Activated CD4-positive, alpha-beta T cell treated with anti-CD3 and anti-CD28 coated beads for 36 hours (primary cell): ENCODE measurements at regions of chr4 and their contacts with region 1.

Region 1: GRCh38 chr4:102430461-102430910 is 70.7 kb upstream of the NFKB1 start:
- DNase-seq: no peak
- ATAC-seq: no peak
- H3K4me3 Mint-ChIP-seq: peak overlapping the region; percentile 81
- H3K27ac Mint-ChIP-seq: peak overlapping the region; percentile 87
- H3K4me1 Mint-ChIP-seq: peaks cover 12% of the 10 kb centered on the region
- H3K27me3 Mint-ChIP-seq: peaks cover 5% of the 10 kb centered on the region

Region 2: GRCh38 chr4:102055805-102056204 is 374.7 kb before region 1 on chr4:
- CTCF ChIA-PET with region 1: no interaction called
- POLR2A ChIA-PET with region 1: no interaction called
- intact Hi-C with region 1: no loop called
- DNase-seq: no peak
- ATAC-seq: no peak
- H3K4me3 Mint-ChIP-seq: no peak overlapping the region
- H3K27ac Mint-ChIP-seq: no peak overlapping the region
- H3K4me1 Mint-ChIP-seq: peaks cover 6% of the 10 kb centered on the region
- H3K27me3 Mint-ChIP-seq: peaks cover 2% of the 10 kb centered on the region

Region 3: DNA sequence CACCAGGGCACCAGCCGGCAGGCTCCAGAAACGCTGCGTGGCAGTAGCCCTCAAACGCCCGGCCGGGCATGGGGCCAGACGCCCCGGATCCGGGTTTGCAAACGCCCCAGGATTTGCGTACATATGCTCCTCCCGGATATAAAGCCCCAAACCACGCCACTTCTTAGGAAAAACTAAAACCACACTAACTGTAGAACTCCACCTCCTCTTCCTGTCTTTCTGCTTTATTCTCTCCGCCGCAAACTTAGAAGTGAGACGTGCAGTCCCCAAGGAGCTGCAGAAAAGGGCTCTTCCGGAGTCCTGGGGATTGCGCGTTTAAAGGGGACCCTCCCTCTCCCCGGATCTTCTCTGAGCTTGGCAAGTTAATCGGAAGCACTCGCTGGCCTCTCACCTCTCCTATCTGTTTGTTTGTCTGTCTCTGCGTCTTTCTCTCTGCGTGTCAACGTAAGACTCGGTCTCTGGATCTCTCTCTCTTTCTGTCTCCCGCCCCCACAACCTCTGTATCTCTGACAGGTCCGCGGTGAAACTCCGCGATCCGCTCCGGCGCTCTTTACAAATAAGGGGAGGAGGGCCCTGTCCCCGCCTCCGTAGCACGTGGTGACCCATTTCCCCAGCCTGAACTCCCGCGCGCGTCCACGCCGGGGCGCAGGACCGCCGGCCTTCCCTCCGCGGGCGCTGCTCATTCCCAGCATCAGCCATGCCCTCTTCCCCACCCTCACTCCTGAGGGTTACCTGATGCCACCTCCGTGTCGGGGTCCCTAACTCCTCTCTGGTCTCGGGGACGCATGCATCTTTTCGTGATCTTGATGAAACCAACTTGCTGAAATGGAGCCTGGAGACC is 85.3 kb before region 1 on chr4 and contains the start of gene SLC39A8:
- CTCF ChIA-PET with region 1: interaction called, 20 read pairs
- POLR2A ChIA-PET with region 1: no interaction called
- intact Hi-C with region 1: loop called (anchors 1 kb)
- DNase-seq: peak; percentile 95
- ATAC-seq: peak; percentile 83
- H3K4me3 Mint-ChIP-seq: peak within 1 kb of the TSS; percentile 86
- H3K27ac Mint-ChIP-seq: peak within 1 kb of the TSS; percentile 99
- H3K4me1 Mint-ChIP-seq: peaks cover 42% of the 10 kb centered on the region
- H3K27me3 Mint-ChIP-seq: no peaks in the 10 kb centered on the region
- total RNA-seq, gene SLC39A8: 46.9 to 53.5 TPM

Region 4: DNA sequence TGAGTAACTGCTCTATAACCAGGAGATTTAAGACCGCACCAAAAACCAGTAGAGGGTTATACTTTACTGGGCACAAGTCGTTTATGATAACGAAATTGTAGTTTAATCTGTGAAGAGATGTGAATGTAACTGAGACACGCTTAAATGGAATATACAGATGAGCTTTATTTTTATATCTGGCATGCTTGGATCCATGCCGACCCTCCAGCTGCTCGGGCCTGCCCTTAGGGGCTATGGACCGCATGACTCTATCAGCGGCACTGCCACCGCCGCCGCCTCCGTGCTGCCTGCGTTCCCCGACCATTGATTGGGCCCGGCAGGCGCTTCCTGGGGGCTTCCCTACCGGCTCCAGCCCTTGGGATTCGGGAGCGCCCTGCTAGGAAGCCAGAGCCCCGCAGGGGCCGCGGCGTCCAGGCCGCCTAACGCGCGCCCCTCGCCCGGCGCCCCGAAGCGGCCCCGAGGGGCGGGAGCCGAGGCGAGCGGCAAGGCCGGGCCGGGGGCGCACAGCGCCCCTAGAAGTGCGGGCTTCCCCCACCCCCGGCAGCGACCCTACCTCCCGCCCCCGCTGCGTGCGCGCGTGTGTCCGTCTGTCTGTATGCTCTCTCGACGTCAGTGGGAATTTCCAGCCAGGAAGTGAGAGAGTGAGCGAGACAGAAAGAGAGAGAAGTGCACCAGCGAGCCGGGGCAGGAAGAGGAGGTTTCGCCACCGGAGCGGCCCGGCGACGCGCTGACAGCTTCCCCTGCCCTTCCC is 70.4 kb after region 1 on chr4 and contains the start of gene NFKB1:
- CTCF ChIA-PET with region 1: no interaction called
- POLR2A ChIA-PET with region 1: no interaction called
- intact Hi-C with region 1: loop called in 1 of 2 experiments (anchors 1 kb)
- DNase-seq: peak; percentile 88
- ATAC-seq: peak; percentile 72
- H3K4me3 Mint-ChIP-seq: peak within 1 kb of the TSS; percentile 97
- H3K27ac Mint-ChIP-seq: peak within 1 kb of the TSS; percentile 96
- H3K4me1 Mint-ChIP-seq: peaks cover 26% of the 10 kb centered on the region
- H3K27me3 Mint-ChIP-seq: no peaks in the 10 kb centered on the region
- total RNA-seq, gene NFKB1: 167 to 174 TPM

Region 5: DNA sequence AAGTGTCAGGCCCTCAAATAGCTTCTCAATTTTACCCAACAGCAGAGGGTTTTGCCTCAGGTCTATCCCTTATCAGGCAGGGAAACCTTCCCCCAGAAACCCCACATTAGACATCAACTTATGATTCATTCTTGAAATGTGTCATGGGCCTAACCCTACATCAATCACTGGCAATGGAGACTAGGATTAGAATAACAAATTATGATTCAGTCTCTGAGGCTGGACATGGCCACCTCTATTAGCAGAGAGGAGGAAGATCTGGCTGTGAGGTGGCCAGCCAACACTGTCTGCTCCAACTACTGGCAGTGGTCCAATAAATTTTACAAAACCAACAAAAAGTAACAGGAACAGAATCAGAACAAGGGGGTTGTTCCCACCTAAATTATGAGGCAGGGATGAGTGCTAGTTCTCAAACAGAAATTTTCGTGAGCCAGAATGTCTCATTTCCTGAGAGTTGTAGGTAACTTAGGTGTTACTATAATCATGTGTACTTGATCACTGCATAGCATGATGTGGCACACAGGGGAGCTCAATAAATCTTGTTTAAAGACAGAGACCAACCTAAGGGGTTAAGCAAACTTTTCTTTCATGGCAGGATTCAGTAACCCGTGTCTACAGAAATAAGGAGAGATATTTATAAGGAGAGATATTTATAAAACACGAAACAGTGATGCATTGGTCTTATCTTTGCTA is 197.5 kb after region 1 on chr4:
- CTCF ChIA-PET with region 1: interaction called, 8 read pairs
- POLR2A ChIA-PET with region 1: no interaction called
- intact Hi-C with region 1: loop called (anchors 1 kb)
- DNase-seq: peak; percentile 48
- ATAC-seq: peak; percentile 85
- H3K4me3 Mint-ChIP-seq: peak overlapping the region; percentile 50
- H3K27ac Mint-ChIP-seq: peak overlapping the region; percentile 86
- H3K4me1 Mint-ChIP-seq: peaks cover 69% of the 10 kb centered on the region
- H3K27me3 Mint-ChIP-seq: no peaks in the 10 kb centered on the region

Region 6: GRCh38 chr4:102868781-102869568 is 438.5 kb after region 1 on chr4 and contains the start of gene CISD2:
- CTCF ChIA-PET with region 1: no interaction called
- POLR2A ChIA-PET with region 1: no interaction called
- intact Hi-C with region 1: loop called in 1 of 2 experiments (anchors 1 kb)
- DNase-seq: peak; percentile 96
- ATAC-seq: peak; percentile 88
- H3K4me3 Mint-ChIP-seq: peak within 1 kb of the TSS; percentile 95
- H3K27ac Mint-ChIP-seq: peak within 1 kb of the TSS; percentile 99
- H3K4me1 Mint-ChIP-seq: peaks cover 53% of the 10 kb centered on the region
- H3K27me3 Mint-ChIP-seq: no peaks in the 10 kb centered on the region
- total RNA-seq, gene CISD2: 33.5 to 35.1 TPM

Region 7: GRCh38 chr4:103099691-103100392 is 669.4 kb after region 1 on chr4 and contains the start of gene BDH2:
- CTCF ChIA-PET with region 1: interaction called, 14 read pairs
- POLR2A ChIA-PET with region 1: no interaction called
- intact Hi-C with region 1: loop called in 1 of 2 experiments (anchors 5 kb)
- DNase-seq: peak; percentile 55
- ATAC-seq: peak; percentile 98
- H3K4me3 Mint-ChIP-seq: peak within 1 kb of the TSS; percentile 74
- H3K27ac Mint-ChIP-seq: peak within 1 kb of the TSS; percentile 85
- H3K4me1 Mint-ChIP-seq: peaks cover 18% of the 10 kb centered on the region
- H3K27me3 Mint-ChIP-seq: no peaks in the 10 kb centered on the region
- total RNA-seq, gene BDH2: 12.7 to 14.8 TPM